Psoas muscle (tissue), 8 donors: ENCODE measurements at regions of chr10 and their contacts with region 1.

Region 1: DNA sequence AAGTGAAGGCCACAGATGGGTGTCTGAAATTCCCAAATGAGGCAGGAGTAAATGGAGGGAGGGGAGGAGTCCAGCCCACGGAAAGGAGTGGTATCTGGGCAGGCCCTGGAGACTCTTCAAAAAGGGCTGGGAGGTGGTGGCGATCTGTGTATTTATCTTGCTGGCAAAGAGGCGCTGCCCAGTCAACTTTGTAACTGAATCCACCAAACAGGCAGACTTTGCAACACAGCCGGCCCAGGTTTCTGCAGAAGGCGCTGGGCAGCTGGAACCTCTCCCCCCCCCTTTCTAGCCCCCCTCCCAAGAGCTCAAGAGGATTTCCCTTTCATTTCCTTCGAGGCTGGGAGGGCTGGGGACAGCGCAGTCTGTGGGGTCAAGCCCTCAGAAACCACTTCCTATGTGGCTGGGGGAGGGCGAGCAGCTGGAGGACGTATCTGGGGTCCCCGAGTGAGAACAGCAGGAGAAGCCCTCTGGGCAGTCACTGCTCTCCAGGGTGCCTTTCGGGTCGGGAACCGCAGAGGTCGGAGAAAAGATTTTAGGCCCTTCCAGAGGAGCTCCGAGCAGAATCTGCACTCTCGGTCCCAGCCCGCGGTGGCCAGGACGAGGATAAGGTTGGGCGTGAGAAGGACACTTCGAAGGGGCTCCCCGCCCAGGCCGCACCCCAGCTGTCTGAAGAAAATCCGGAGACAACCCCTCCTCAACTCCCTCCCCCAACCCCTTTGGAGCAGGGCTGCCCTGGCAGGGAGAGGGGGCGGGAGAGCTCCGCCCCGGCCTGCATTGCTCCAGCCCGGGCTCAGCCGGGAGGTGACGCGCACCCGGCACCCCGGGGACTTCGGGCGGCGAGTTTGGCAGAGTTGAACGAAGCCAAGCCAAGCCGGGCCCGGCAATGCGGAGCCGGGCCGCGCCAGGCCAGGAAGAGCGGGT is 965 bp downstream of the ZCCHC24 start:
- DNase-seq: peak; percentile 84 to 91
- ATAC-seq: peak; percentile 33 to 44 (median 38)
- H3K4me3 ChIP-seq: peak overlapping the region; percentile 76
- H3K27ac ChIP-seq: peak overlapping the region; percentile 93
- H3K4me1 ChIP-seq: peaks cover 64% of the 10 kb centered on the region
- H3K27me3 ChIP-seq: no peaks in the 10 kb centered on the region
- CTCF ChIP-seq: no peak

Region 2: DNA sequence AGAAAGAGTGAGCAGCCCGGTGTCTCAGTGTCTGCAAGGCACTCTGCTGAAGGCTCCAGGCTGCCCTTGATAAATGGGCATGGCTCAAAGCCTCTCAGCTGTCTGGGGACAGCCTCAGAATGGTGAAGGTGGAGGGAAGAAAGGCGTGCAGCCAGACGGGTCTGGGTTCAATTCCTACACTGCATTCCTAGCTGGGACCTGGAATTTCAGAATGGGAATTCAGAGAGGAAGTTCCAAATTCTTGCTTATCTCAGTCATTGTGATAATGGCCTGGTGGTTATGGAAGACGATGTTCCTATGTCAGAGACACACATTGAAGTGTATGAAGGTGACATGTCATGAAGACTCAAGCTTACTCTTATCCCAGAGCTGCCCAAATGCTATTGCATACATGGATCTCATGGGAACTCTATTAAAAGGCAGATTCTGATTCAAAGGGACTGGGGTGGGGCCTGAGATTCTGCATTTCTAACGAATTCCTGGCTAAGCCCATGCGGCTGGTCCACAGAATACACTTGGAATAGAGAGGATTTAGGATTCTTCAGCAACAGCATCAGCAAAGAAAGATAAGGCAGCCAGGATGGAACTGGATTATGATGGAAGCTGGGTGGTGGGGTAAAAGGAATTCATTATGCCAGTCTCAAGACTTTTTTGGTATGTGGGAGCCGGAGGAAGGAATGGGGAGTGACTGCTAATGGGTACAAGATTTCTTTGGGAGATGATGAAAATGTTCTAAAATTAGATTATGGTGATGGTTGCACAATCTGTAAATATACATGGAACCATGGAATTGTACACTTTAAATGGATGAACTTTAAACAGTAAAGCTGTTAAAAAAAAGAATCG is 458.3 kb before region 1 on chr10:
- intact Hi-C with region 1: loop called in 1 of 2 experiments (anchors 5 kb)
- DNase-seq: no peak
- ATAC-seq: peak in 2 of 4 donors; percentile 33 to 64
- H3K4me3 ChIP-seq: no peak overlapping the region
- H3K27ac ChIP-seq: no peak overlapping the region
- H3K4me1 ChIP-seq: peaks cover 16% of the 10 kb centered on the region
- H3K27me3 ChIP-seq: no peaks in the 10 kb centered on the region
- CTCF ChIP-seq: no peak

Region 3: DNA sequence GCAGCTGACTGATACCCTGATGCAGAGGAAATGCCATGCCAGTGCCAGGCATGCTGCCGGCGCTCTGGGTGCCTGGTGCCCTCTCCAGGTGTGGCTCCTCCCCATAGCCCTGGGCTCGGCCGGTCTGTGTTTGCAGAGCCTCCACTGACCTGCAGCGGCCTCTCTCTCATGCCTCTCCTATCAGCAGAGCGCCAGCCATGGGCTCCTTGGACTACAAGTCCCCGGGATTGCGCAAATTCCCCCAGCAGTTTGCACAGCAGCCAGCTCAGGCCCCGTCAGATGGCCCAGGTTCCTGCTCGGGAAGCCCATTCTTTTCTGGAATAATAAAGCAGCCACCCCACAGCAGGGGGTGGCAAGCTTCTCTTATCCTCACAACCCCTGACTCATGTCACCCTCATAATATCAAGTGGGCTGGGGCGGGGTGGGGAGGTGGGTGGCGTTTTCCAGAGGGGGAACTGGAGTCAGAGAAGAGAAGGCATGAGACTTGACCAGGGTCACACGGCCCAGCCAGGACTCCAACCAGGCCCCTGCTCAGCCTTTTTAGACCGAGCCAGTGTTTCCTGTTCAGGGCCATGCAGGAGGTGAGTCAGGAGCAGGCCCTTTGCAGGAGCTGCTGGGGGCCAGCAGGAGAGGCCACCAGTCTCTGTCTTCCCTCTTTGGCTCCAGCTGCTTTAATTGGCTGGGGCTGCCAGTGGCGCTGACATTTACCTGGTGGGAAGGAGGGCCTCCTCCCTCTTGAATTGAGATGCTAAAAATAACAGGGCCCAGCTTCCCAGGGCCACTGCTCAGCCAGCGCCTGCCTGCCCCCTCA is 317.1 kb before region 1 on chr10:
- intact Hi-C with region 1: no loop called
- DNase-seq: peak; percentile 80 to 81
- ATAC-seq: peak in 2 of 4 donors; percentile 41 to 42
- H3K4me3 ChIP-seq: no peak overlapping the region
- H3K27ac ChIP-seq: peak overlapping the region; percentile 23
- H3K4me1 ChIP-seq: peaks cover 59% of the 10 kb centered on the region
- H3K27me3 ChIP-seq: no peaks in the 10 kb centered on the region
- CTCF ChIP-seq: no peak

Region 4: GRCh38 chr10:79221110-79222051 is 223.1 kb before region 1 on chr10:
- intact Hi-C with region 1: no loop called
- DNase-seq: peak; percentile 79 to 85
- ATAC-seq: peak; percentile 42 to 65 (median 54)
- H3K4me3 ChIP-seq: no peak overlapping the region
- H3K27ac ChIP-seq: peak overlapping the region; percentile 63
- H3K4me1 ChIP-seq: peaks cover 20% of the 10 kb centered on the region
- H3K27me3 ChIP-seq: no peaks in the 10 kb centered on the region
- CTCF ChIP-seq: no peak

Region 5: GRCh38 chr10:79400146-79401004 is 44.1 kb before region 1 on chr10:
- intact Hi-C with region 1: loop called (anchors 5 kb)
- DNase-seq: peak; percentile 51 to 74
- ATAC-seq: peak in 2 of 4 donors; percentile 29 to 34
- H3K4me3 ChIP-seq: peak overlapping the region; percentile 22
- H3K27ac ChIP-seq: peak overlapping the region; percentile 86
- H3K4me1 ChIP-seq: peaks cover 98% of the 10 kb centered on the region
- H3K27me3 ChIP-seq: no peaks in the 10 kb centered on the region
- CTCF ChIP-seq: peak; percentile 61

Region 6: DNA sequence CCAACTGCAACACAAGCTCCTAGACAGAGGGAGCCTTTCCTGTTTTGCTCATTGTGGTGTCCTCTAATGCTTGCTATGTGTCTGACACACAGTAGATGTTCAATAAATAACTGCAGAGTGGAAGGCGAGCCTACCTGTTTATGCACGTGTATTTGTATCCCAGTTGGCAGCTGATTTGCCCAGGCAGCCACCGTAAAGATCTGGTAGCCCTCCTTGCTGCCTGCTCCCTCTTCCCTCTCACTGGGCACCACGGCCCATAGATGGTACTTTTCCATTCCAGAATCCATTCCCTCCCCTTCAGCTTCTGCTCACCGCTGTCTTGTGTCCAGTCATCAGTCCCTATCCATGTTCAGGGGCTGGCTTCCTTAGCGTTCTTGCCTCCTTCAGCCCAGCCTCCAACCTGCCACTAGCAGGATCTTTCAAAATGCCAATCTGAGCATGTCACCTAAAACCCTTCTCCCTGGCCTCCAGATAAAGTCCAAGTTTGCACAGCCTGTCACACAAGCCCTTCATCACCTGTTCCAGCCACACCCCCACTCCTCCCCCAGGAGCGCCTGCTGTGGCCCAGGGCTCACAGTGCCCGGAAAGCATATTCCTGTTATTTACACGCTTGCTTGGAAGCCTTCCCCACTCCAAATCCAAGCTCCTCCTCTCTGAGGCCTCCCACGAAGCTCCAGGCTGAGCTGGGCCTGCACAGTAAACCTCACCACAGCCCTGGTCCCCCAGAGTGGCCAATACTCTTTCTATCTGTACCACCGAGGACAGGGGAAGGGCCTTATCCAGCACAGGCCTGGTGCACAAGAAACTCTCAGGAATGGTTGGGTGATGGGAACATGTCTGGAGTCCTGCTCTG is 20.0 kb before region 1 on chr10:
- intact Hi-C with region 1: loop called in 1 of 2 experiments (anchors 2 kb)
- DNase-seq: peak; percentile 66 to 86
- ATAC-seq: peak; percentile 90 to 96 (median 92)
- H3K4me3 ChIP-seq: peak overlapping the region; percentile 15
- H3K27ac ChIP-seq: peak overlapping the region; percentile 82
- H3K4me1 ChIP-seq: peaks cover 68% of the 10 kb centered on the region
- H3K27me3 ChIP-seq: no peaks in the 10 kb centered on the region
- CTCF ChIP-seq: no peak

Region 7: DNA sequence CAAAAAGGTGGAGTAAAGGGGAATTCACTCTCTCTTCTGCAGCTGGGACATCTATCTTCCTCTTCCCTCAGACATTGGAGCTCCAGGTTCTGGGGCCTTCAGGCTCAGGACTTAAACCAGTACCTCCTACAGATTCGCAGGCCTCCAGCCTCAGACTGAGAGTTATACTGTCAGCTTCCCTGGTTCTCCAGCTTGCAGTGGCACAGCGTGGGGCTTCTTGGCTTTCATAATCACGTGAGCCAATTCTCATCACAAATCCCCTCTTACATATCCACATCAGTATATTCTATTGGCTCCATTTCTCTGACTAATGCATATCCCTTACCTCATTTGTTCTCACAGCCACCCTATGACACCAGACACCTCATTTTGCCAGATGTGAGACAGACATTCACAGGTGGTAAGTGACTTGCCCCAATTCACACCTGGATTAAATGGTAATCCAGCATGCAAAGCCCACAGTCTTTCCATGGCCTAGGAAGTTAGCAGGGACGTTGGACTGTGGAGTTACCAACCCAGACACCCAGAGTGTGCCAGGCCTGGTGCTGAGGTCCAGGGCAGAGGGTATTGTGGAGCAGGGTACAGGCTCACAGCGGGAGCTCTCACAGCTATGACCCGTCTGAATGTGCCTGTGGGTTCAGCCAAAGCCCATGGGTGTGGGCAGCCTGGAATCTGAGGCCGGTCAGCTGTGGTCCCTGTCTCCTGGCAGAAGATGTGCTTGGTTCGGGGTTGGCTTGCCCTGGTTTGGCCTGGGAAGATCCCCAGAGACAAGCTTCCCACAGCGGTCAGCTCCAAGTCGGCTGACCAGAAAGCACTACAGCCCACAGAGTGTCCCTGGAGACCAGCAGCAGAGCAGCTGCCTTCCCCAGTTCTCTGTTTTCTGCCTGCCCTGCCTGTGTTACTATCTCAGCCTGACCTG is 19.4 kb after region 1 on chr10:
- intact Hi-C with region 1: loop called in 1 of 2 experiments (anchors 2 kb)
- DNase-seq: peak; percentile 60 to 84
- ATAC-seq: peak; percentile 66 to 87 (median 76)
- H3K4me3 ChIP-seq: no peak overlapping the region
- H3K27ac ChIP-seq: peak overlapping the region; percentile 71
- H3K4me1 ChIP-seq: peaks cover 17% of the 10 kb centered on the region
- H3K27me3 ChIP-seq: no peaks in the 10 kb centered on the region
- CTCF ChIP-seq: no peak